H1 (cell line): ENCODE measurements at regions of chr10 and their contacts with region 1.

Region 1: DNA sequence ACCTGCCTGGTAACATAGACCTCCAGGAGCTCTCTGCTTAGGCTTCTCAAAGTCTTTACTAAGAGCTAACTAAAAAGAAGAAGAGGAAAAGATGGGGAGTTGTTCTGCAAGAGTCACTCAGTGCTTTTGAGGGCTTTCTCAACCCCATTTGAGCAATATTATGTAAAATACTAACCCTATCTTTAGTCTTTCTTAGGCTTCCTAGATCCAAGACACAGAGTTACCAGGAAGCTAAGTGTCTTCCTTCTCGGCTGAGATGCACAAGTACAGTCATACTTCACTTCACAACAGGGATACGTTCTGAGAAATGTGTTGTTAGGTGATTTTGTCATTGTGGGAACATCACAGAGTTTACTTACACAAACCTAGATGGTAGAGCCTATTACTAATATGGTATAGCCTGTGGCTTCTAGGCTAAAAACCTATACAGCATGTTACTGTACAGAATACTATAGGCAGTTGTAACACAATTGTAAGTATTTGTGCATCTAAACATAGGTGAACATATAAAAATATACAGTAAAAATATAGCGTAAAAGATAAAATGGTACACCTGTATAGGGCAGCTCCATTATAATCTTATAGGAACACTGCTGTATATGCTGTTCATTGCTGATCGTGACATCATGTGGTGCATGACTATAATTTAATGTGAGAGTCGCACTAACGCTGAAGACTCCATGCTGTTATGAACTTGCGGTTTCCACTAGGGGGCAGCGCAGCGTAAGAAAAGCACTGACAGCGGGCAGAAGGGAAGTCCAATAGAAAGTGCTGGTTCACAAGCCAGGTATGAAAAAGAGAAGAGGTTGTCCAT is 16.3 kb downstream of the ANKRD22 start:
- DNase-seq: peak in 1 of 2 experiments; percentile 80
- H3K4me3 ChIP-seq: no peak overlapping the region
- H3K27ac ChIP-seq: no peak overlapping the region
- H3K4me1 ChIP-seq: no peaks in the 10 kb centered on the region
- H3K27me3 ChIP-seq: no peaks in the 10 kb centered on the region
- CTCF ChIP-seq: peak; percentile 69 to 95 (median 87)
- EP300 ChIP-seq: no peak
- POLR2A ChIP-seq: no peak
- RAD21 ChIP-seq: peak; percentile 97 to 98

Region 2: GRCh38 chr10:88820748-88821389 is 14.4 kb before region 1 on chr10:
- CTCF ChIA-PET with region 1: interaction called, 30 read pairs
- POLR2A ChIA-PET with region 1: no interaction called
- DNase-seq: no peak
- H3K4me3 ChIP-seq: no peak overlapping the region
- H3K27ac ChIP-seq: no peak overlapping the region
- H3K4me1 ChIP-seq: no peaks in the 10 kb centered on the region
- H3K27me3 ChIP-seq: no peaks in the 10 kb centered on the region
- CTCF ChIP-seq: no peak
- EP300 ChIP-seq: no peak
- POLR2A ChIP-seq: no peak
- RAD21 ChIP-seq: no peak

Region 3: GRCh38 chr10:88865281-88865876 is 30.1 kb after region 1 on chr10:
- CTCF ChIA-PET with region 1: interaction called, 14 read pairs
- POLR2A ChIA-PET with region 1: no interaction called
- DNase-seq: no peak
- H3K4me3 ChIP-seq: no peak overlapping the region
- H3K27ac ChIP-seq: no peak overlapping the region
- H3K4me1 ChIP-seq: no peaks in the 10 kb centered on the region
- H3K27me3 ChIP-seq: no peaks in the 10 kb centered on the region
- CTCF ChIP-seq: peak in 1 of 3 experiments; percentile 16; a peak in 2 of 4 replicates
- EP300 ChIP-seq: no peak
- POLR2A ChIP-seq: no peak
- RAD21 ChIP-seq: peak; percentile 7 to 15; a peak in 1 of 4 replicates

Region 4: DNA sequence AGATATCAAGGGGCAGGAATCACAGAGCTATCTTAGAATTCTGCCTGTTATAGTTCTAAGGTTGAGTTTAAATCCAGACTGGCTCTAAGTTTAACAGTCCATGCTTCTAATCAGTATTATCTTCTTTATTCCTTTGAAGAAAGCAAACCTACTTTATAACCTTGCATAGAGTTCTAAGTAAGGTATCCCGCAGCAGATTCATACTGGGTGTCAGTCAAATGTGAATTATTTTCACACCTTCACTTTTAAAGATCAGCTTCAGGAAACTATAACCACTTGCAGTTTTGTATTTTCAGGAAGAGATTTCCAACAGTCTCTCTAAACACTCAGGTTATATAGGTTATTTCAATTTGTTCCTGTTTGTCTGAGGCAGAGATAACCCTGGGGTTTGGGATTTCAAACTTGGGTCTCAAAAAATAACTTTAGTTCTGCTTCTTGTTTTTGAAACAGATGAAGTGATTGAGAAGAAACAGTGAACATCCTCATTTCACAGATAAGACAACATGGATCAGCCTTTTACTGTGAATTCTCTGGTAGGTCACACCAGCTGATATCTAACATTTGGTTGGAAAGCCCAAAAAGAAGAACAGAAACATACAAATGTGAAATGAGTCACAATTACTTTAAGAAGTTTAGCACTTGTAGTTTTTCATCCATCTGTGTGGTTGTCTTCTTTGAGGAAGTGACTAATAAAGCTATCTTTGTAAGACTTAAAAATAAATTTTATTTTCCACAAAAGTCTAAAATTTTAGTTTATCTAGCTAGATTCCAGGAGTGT is 66.1 kb after region 1 on chr10:
- CTCF ChIA-PET with region 1: interaction called, 16 read pairs
- POLR2A ChIA-PET with region 1: no interaction called
- DNase-seq: no peak
- H3K4me3 ChIP-seq: no peak overlapping the region
- H3K27ac ChIP-seq: no peak overlapping the region
- H3K4me1 ChIP-seq: peaks cover 0 to 3% (median 0%) of the 10 kb centered on the region in 4 experiments; a peak in 2 of 7 replicates
- H3K27me3 ChIP-seq: no peaks in the 10 kb centered on the region
- CTCF ChIP-seq: no peak
- EP300 ChIP-seq: no peak
- POLR2A ChIP-seq: no peak
- RAD21 ChIP-seq: no peak

Region 5: DNA sequence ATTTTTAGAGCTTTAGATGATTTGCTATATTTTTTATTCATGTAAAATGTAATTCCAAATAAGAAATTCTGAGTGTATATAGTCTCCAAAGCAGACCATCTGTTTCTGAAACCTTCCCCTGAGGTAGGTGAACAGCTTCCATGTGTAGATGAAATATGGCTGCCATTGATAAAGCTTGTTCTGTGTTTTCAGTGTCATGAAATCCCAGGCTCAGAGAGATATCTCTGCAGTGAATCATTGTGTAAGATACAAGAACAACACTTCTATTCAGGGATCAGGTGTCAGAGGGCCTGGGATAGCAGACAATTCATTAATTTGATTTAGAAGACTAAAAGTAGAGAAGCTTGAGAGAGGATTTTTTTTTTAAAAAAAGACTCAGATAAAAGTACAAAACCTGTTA is 88.2 kb after region 1 on chr10:
- CTCF ChIA-PET with region 1: interaction called, 279 read pairs
- POLR2A ChIA-PET with region 1: no interaction called
- DNase-seq: no peak
- H3K4me3 ChIP-seq: no peak overlapping the region
- H3K27ac ChIP-seq: no peak overlapping the region
- H3K4me1 ChIP-seq: no peaks in the 10 kb centered on the region
- H3K27me3 ChIP-seq: no peaks in the 10 kb centered on the region
- CTCF ChIP-seq: no peak
- EP300 ChIP-seq: no peak
- POLR2A ChIP-seq: no peak
- RAD21 ChIP-seq: no peak